Common myeloid progenitor, CD34-positive (primary cell): ENCODE measurements at regions of chr10 and their contacts with region 1.

Region 1: DNA sequence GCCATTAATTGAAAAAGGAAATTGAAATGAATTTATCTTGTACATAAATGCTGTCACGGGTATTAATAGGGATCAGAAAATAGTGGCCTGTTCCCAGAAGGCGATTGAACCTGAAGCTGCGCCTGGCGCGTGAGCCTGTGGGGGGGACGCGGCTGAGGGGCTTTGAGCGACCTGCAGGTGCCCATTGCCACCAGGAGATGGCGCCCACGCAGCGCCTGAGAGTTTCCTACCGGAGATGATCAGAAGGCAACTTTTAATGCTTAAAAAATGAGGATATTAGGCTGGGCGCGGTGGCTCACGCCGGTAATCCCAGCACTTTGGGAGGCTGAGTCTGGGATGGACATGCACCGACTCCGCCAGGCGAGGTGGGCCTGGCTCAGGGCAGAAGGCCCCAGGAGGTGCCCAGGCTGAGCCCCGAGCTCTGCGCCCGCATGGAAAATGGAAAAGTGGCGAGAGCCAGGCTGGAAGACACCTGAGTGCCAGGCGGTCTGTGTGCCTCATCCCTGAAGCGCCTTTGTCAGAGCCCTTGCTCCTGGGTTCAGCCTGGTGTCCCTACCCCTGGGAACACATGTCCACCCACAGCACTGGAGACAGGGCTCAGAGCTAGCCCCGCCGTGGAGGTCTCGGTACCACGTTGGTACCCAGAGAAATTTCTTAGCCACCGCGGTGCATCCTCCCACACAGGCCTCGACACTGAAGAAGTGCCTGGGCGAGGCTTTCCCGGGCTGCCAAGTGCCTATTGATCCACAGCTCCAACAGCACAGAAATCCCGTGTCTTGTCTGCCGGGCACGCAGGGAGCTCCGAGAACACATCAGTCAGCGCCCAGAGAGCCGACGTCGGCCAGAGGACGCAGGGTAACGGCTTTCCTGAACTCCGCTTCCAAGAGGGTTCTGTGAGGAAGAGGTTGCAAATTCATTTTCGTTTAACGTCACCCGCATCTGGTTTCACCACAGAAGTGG is 117.4 kb downstream of the INPP5A start:
- DNase-seq: peak; percentile 50 to 81 (median 75)
- H3K4me3 ChIP-seq: no peak overlapping the region
- H3K27ac ChIP-seq: no peak overlapping the region
- H3K4me1 ChIP-seq: no peaks in the 10 kb centered on the region
- H3K27me3 ChIP-seq: no peaks in the 10 kb centered on the region

Region 2: GRCh38 chr10:132667342-132668047 is 12.5 kb after region 1 on chr10:
- CTCF ChIA-PET with region 1: interaction called, 11 read pairs
- POLR2A ChIA-PET with region 1: no interaction called
- DNase-seq: no peak
- H3K4me3 ChIP-seq: no peak overlapping the region
- H3K27ac ChIP-seq: no peak overlapping the region
- H3K4me1 ChIP-seq: no peaks in the 10 kb centered on the region
- H3K27me3 ChIP-seq: no peaks in the 10 kb centered on the region

Region 3: GRCh38 chr10:132700156-132701098 is 45.4 kb after region 1 on chr10:
- CTCF ChIA-PET with region 1: no interaction called
- POLR2A ChIA-PET with region 1: no interaction called
- DNase-seq: no peak
- H3K4me3 ChIP-seq: no peak overlapping the region
- H3K27ac ChIP-seq: no peak overlapping the region
- H3K4me1 ChIP-seq: no peaks in the 10 kb centered on the region
- H3K27me3 ChIP-seq: no peaks in the 10 kb centered on the region